ENCODE measurements at regions of chr5 and their contacts with region 1.

Region 1: DNA sequence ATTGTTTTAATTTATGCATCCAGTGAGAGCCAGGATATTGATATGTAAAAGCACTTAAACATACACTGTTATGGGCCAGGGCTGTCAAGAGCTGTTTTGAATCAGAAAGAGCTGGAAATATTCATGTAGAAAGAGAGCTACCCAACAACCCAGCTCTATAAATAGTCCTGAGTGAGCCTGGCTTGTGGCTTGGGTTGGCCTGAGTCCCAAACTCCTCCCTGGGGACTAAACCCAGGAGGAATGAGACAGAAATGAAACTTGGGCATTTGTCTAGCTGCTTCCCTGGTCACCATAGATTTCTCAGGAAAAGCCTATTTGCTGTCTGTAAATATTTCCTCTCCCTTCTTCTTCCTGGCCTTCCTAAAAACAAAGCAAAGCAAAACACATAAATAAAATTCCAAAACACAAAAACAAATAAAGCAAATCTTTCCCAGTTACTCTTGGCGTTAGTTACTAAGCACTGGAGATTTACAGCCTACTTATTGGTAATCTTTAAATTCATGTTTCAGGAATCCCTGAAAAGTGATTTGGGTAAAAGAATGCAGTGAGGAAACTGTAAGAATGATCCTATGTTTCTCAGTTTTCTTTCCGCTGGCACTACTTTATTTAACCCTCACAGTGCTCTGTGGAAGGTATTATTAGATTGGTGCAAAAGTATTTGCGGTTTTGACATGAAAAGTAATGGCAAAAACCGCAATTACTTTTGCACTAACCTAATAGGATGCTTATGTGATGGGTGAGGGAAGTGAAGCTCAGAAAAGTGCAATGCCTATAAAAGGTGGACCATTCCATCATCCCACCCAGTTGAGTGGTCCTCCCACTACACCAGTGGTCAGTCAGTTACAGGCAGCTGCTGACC is 111.8 kb downstream of the CARTPT start:
- DNase-seq: peak; percentile 84 to 94
- H3K4me3 ChIP-seq: no peak overlapping the region
- H3K27ac ChIP-seq: peak overlapping the region; percentile 75 to 79
- H3K4me1 ChIP-seq: peaks cover 0 to 30% (median 23%) of the 10 kb centered on the region in 4 donors
- H3K27me3 ChIP-seq: no peaks in the 10 kb centered on the region
- CTCF ChIP-seq: no peak

Region 2: GRCh38 chr5:71748369-71748780 is 82.5 kb before region 1 on chr5:
- intact Hi-C with region 1: no loop called
- DNase-seq: peak; percentile 73 to 83
- H3K4me3 ChIP-seq: no peak overlapping the region
- H3K27ac ChIP-seq: no peak overlapping the region
- H3K4me1 ChIP-seq: no peaks in the 10 kb centered on the region
- H3K27me3 ChIP-seq: no peaks in the 10 kb centered on the region
- CTCF ChIP-seq: no peak

Region 3: DNA sequence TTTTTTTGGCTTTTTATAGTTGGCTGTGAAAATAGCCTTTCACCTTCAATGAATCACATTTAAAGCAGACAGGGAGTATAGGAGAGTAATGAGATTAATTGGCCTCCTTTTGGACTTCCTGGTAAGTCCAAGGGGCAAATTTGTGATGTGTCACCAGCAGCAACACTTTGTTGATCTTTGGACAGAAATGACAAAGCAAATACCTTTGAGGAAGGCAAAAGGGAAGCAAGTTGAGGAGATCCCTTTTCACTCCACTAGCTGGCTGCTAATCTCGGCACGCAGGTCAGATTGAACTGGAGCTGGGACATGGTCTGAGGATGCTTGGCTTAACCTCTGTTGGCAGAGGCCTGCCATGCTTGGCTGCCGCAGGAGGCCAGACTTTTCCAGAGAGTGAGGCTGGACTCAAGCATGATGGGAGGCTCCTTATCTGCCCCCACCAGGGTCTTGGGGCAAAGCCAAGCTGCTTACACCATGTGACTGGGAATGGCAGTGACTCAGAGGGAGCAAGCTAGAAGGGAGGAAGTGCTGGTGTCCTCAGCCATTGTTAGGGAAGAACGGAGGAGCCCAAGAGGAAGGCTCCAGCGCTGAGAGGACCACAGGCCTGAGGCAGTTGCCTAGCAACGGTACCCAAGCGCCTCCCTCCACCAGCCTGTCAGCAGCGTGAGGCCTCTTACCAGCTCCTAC is 101.9 kb after region 1 on chr5:
- intact Hi-C with region 1: loop called (anchors 2 kb)
- DNase-seq: peak; percentile 83 to 96
- H3K4me3 ChIP-seq: no peak overlapping the region
- H3K27ac ChIP-seq: peak overlapping the region; percentile 85 to 91
- H3K4me1 ChIP-seq: peaks cover 0 to 34% (median 17%) of the 10 kb centered on the region in 4 donors
- H3K27me3 ChIP-seq: no peaks in the 10 kb centered on the region
- CTCF ChIP-seq: peak in 1 of 2 experiments; percentile 45

Region 4: DNA sequence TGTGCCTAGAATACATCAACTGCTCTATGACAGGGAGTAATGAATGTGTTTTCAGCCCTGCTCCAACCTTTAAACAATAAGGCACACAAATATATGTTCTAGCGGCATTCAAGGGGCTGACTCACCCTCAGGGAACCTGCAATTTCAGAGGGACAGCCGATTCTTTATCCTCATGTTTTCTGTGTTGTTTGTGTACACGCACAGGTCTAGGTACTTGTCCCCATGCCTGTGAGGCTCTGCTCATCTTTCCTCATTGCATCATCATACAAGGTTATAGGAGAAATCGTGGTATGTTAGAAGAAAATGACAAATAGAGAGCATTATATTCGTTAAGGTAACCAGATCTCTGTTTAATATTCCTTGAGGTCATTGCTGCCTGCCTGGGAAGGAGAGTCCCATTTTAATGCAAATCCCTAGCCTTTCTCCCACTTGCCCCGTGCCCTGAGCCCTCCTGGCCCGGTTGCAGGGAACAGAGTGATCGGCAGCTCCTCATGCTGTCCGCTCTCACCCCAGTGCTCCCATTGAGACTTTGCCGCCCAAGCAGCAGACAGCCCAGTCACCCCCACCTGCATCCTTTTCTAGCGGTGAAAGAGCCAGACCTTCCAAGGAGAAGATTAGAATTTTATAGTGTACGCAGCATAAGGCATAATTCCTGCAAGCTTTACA is 291.0 kb after region 1 on chr5:
- intact Hi-C with region 1: no loop called
- DNase-seq: no peak
- H3K4me3 ChIP-seq: no peak overlapping the region
- H3K27ac ChIP-seq: peak overlapping the region in 1 of 2 donors; percentile 0
- H3K4me1 ChIP-seq: peaks cover 0 to 97% (median 42%) of the 10 kb centered on the region in 4 donors
- H3K27me3 ChIP-seq: no peaks in the 10 kb centered on the region
- CTCF ChIP-seq: no peak

Region 5: DNA sequence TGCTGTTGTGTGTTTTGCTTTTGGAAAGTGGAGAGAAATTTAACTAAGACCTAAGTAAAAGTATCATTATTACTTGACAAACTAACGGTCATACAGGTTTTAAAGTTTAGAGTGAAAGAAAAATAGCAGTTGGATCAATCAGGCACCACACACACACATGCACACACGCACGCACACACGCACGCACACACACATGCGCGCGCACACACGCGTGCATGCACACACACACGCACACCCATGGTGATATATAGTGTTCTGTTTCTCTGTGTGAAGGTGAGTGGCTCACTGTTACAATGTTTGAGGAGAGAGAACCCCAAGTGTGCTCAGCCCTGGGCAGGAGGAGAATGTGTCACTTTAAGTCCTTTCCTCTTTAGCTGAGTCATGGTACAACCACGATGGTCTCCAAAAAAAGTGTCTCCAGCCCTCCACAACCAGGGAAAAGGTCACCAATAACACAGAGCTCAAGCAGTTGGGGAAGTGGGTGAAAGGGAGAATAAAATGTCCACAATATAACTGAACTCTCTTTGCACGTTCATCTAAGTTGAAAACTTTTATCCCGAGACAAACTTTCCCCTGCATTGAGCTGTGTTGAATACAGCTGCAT is 673.1 kb after region 1 on chr5:
- intact Hi-C with region 1: no loop called
- DNase-seq: no peak
- H3K4me3 ChIP-seq: no peak overlapping the region
- H3K27ac ChIP-seq: peak overlapping the region; percentile 20 to 41
- H3K4me1 ChIP-seq: peaks cover 0 to 34% (median 3%) of the 10 kb centered on the region in 4 donors
- H3K27me3 ChIP-seq: no peaks in the 10 kb centered on the region
- CTCF ChIP-seq: no peak